ENCODE measurements at regions of chr2 and their contacts with region 1.

Region 1: DNA sequence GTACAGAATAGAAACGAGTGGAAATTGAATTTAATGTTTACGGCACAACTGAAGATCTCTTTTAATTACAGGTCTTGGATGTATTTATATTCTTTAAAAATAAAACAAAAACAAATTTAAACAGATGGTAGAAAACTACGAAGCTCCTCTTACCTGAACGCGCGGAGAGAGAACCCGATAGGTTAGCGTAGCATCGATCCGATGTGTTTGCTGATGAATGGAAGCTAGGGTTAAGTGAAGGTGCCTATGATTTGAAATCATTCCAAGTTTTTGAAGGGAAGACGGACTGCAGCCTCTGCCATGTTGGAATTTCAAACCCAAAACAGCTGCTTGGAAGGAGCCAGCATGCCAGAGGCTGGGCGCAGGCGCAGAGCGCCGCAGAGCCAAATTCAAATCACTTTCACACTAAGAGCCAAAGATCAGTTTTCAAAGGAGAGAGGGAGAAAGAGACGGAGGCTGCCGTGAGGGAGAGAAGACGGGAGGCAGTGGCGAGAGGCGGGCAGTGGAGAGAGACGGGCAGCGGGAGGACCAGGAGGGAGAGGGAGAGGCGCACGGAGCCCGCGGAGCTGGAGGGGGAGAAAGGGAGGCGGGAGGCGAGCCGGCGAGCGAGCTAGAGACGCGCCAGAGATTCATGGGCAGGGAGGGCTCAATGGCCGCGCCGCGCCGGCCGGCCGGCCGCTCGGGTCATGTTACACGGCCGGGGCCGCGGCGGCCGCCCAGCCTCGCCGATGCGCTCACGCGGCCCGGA is at the start of gene FIGN:
- DNase-seq: peak; percentile 85
- ATAC-seq: peak; percentile 88
- total RNA-seq, gene FIGN: 16.7 TPM

Region 2: DNA sequence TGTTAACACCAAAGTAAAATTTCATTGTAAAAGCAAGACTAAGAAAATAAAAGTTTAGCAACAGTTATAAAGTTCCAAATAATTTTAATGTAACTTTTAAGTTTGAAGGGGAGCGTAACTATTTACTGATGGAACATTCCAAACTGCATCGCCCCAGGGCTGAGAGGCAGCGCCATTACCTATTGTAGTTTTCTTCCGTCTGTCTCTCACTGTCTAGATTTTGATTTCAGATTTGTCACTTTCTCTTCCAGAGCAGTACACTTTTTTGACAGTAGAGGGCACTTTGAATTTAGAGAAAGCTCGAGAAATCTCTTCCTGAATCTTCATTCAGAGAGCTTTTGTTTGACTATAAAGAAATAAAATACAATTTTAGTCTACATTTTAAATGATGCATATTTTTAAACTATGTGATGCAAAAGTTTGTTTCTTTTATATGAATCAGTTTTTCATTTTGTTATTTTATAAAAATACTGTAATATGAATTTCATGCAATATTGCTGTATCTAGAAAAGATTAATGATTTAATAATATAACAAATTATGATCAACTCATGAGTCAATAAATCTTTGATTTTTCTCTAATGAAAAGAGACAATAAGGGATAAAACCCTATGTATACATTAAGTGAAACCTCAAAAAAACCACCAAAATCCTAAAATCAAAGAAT is 389.8 kb before region 1 on chr2:
- intact Hi-C with region 1: loop called (anchors 1 kb)
- DNase-seq: no peak
- ATAC-seq: no peak

Region 3: DNA sequence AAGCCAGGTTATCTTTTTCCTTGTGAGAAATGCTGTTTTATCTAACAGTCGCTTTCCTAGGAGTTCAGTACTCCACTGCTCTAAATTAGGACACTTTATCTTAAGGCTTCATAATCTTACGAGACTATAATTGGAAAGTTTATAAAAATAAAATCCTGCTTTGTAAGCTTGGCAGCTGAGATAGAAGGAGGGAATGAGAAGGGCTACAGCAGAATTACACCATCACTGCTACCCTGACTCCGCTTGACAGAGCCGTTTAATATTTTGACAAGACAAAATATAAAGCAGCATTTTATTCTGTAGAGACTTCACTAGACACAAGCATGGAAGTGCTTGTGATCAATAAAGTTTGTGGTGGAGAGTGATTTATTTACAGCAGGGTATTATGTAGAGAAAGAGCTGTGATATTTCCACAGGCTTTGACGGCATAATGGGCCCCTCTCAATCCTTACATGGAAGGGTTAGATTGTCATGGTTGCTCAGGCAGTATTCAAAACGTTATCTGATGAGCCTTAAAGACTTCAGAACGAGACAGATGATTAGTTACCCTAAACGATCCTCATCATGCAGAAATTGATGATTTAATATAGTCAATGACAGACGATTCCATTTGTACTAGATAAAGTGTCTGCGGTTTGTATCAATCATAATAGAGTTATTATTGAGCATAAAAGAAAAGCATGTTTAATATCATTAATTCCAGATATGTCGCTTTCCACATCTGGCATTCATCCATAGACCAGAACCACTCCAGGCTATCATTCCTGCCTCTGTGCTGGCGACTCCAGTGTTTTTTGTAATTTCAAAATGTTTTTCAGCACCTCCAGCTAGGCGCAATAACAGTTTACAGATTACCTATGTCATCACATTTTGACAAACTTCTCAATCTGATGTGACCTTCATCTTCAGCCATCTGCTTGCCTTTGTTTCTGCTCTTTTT is 242.2 kb before region 1 on chr2:
- intact Hi-C with region 1: loop called (anchors 5 kb)
- DNase-seq: no peak
- ATAC-seq: peak; percentile 42

Region 4: GRCh38 chr2:163626639-163627109 is 109.2 kb before region 1 on chr2:
- intact Hi-C with region 1: loop called (anchors 5 kb)
- DNase-seq: no peak
- ATAC-seq: peak; percentile 64

Region 5: GRCh38 chr2:163667064-163667887 is 68.6 kb before region 1 on chr2:
- intact Hi-C with region 1: loop called (anchors 2 kb)
- DNase-seq: no peak
- ATAC-seq: peak; percentile 82

Region 6: GRCh38 chr2:163752267-163752666 is 16.4 kb after region 1 on chr2:
- intact Hi-C with region 1: no loop called
- DNase-seq: no peak
- ATAC-seq: no peak

Region 7: GRCh38 chr2:163800951-163801381 is 65.1 kb after region 1 on chr2:
- intact Hi-C with region 1: no loop called
- DNase-seq: no peak
- ATAC-seq: no peak

Region 8: GRCh38 chr2:164061129-164061746 is 325.4 kb after region 1 on chr2:
- intact Hi-C with region 1: loop called (anchors 2 kb)
- DNase-seq: no peak
- ATAC-seq: no peak